ENCODE measurements at regions of chr12 and their contacts with region 1.

Region 1: GRCh38 chr12:102119674-102120563 is at the starts of genes NUP37 and PARPBP:
- DNase-seq: peak; percentile 82 to 95 (median 89)
- ATAC-seq: peak; percentile 94
- H3K4me3 ChIP-seq: peak within 1 kb of the TSS; percentile 86
- H3K4me3 Mint-ChIP-seq: peak within 1 kb of the TSS; percentile 93
- H3K27ac ChIP-seq: peak within 1 kb of the TSS; percentile 55 to 84
- H3K27ac Mint-ChIP-seq: peak within 1 kb of the TSS; percentile 92
- H3K4me1 ChIP-seq: peaks cover 17% of the 10 kb centered on the region
- H3K4me1 Mint-ChIP-seq: peaks cover 42% of the 10 kb centered on the region
- H3K27me3 ChIP-seq: no peaks in the 10 kb centered on the region
- H3K27me3 Mint-ChIP-seq: no peaks in the 10 kb centered on the region
- CTCF ChIP-seq: no peak
- total RNA-seq, gene NUP37: 9.4 to 9.6 TPM
- total RNA-seq, gene PARPBP: 1.1 to 1.5 TPM

Region 2: DNA sequence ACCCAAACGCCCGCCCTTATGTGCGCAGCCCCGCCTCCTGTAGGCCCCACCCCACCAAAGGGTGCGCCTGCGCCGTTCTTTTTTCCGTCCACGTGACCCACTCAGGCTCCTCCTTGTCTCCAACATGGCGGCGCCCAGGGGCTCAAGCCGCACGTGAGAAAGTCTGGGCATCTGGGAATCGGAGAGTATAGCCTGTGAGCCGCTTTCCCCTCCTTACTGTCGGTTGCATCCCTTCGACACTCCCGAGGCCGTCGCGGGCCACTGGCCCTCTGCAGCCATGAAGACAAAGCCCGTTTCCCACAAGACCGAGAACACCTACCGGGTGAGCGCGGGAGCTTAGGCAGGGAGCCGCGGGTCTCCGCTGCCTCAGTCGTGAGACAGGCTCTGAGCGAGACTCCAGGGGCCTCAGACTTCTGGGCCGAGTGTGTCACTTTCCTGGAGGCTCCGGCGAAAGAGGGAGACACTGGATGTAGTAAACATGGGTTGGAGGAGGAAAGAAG is 839.9 kb before region 1 on chr12 and contains the start of gene UTP20:
- CTCF ChIA-PET with region 1: no interaction called
- POLR2A ChIA-PET with region 1: no interaction called
- intact Hi-C with region 1: loop called in 1 of 2 experiments (anchors 5 kb)
- DNase-seq: peak; percentile 89 to 96 (median 94)
- ATAC-seq: peak; percentile 100
- H3K4me3 ChIP-seq: peak within 1 kb of the TSS; percentile 72
- H3K4me3 Mint-ChIP-seq: peak within 1 kb of the TSS; percentile 97
- H3K27ac ChIP-seq: no peak within 1 kb of the TSS
- H3K27ac Mint-ChIP-seq: peak within 1 kb of the TSS; percentile 71
- H3K4me1 ChIP-seq: peaks cover 8% of the 10 kb centered on the region
- H3K4me1 Mint-ChIP-seq: peaks cover 25% of the 10 kb centered on the region
- H3K27me3 ChIP-seq: no peaks in the 10 kb centered on the region
- H3K27me3 Mint-ChIP-seq: peaks cover 13% of the 10 kb centered on the region
- CTCF ChIP-seq: no peak
- total RNA-seq, gene UTP20: 9.1 to 9.6 TPM

Region 3: DNA sequence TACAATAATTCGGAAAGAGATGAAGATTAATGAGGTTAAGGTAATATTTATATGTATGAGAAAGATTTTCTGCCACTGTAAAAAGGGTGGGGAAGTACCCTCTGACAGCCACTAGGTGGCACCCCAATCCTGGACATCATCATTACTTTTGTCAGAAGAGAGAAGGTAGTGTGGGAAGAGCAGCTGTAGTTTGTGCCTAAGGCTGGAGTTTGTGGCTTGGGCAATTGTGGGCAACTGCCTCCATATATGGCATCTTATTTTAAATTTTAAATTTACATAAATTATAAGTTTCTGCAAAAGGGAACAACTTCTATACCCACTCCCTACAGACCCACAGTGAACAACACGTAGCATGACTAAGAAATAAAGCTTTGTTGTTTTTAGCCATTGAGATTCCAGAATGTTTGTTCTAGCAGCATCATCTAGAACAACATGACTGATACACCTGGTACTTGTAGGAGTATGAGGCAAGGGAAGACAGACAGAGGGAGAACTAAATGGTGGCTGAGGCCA is 346.2 kb before region 1 on chr12:
- CTCF ChIA-PET with region 1: no interaction called
- POLR2A ChIA-PET with region 1: no interaction called
- intact Hi-C with region 1: loop called in 1 of 2 experiments (anchors 10 kb)
- DNase-seq: peak; percentile 52 to 85 (median 60)
- ATAC-seq: peak; percentile 97
- H3K4me3 ChIP-seq: no peak overlapping the region
- H3K4me3 Mint-ChIP-seq: no peak overlapping the region
- H3K27ac ChIP-seq: no peak overlapping the region
- H3K27ac Mint-ChIP-seq: no peak overlapping the region
- H3K4me1 ChIP-seq: no peaks in the 10 kb centered on the region
- H3K4me1 Mint-ChIP-seq: peaks cover 5% of the 10 kb centered on the region
- H3K27me3 ChIP-seq: no peaks in the 10 kb centered on the region
- H3K27me3 Mint-ChIP-seq: no peaks in the 10 kb centered on the region
- CTCF ChIP-seq: peak; percentile 92

Region 4: GRCh38 chr12:101876861-101877815 is 242.8 kb before region 1 on chr12 and contains the start of gene DRAM1:
- CTCF ChIA-PET with region 1: no interaction called
- POLR2A ChIA-PET with region 1: no interaction called
- intact Hi-C with region 1: loop called in 1 of 2 experiments (anchors 5 kb)
- DNase-seq: peak; percentile 41 to 89 (median 60)
- ATAC-seq: peak; percentile 79
- H3K4me3 ChIP-seq: peak within 1 kb of the TSS; percentile 79
- H3K4me3 Mint-ChIP-seq: peak within 1 kb of the TSS; percentile 89
- H3K27ac ChIP-seq: peak within 1 kb of the TSS; percentile 29 to 73
- H3K27ac Mint-ChIP-seq: peak within 1 kb of the TSS; percentile 72
- H3K4me1 ChIP-seq: peaks cover 18% of the 10 kb centered on the region
- H3K4me1 Mint-ChIP-seq: peaks cover 7% of the 10 kb centered on the region
- H3K27me3 ChIP-seq: no peaks in the 10 kb centered on the region
- H3K27me3 Mint-ChIP-seq: no peaks in the 10 kb centered on the region
- CTCF ChIP-seq: no peak
- total RNA-seq, gene DRAM1: 1.3 to 1.6 TPM

Region 5: DNA sequence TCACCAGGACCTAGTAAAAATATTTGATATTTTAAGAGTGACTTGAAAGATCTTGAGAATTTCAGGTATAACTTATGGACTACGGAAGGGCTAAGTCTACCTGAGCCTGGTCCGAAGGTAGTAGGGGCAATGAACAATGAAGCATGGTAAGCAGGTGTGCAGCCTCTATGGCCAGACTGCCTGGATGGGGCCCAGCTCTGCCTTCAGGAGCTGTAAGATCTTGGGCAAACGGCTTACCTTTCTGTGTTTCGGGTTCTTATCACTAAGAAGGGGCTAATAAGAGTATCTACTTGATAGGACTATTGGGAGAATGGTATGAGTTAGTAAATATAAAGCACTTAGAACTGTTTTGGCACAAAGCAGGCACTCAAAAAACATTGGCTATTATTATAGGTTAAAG is 39.1 kb before region 1 on chr12:
- CTCF ChIA-PET with region 1: no interaction called
- POLR2A ChIA-PET with region 1: no interaction called
- intact Hi-C with region 1: loop called in 1 of 2 experiments (anchors 5 kb)
- DNase-seq: no peak
- ATAC-seq: no peak
- H3K4me3 ChIP-seq: no peak overlapping the region
- H3K4me3 Mint-ChIP-seq: no peak overlapping the region
- H3K27ac ChIP-seq: no peak overlapping the region
- H3K27ac Mint-ChIP-seq: no peak overlapping the region
- H3K4me1 ChIP-seq: no peaks in the 10 kb centered on the region
- H3K4me1 Mint-ChIP-seq: no peaks in the 10 kb centered on the region
- H3K27me3 ChIP-seq: no peaks in the 10 kb centered on the region
- H3K27me3 Mint-ChIP-seq: no peaks in the 10 kb centered on the region
- CTCF ChIP-seq: no peak

Region 6: GRCh38 chr12:102539651-102540553 is 420.0 kb after region 1 on chr12:
- CTCF ChIA-PET with region 1: no interaction called
- POLR2A ChIA-PET with region 1: no interaction called
- intact Hi-C with region 1: no loop called
- DNase-seq: no peak
- ATAC-seq: no peak
- H3K4me3 ChIP-seq: no peak overlapping the region
- H3K4me3 Mint-ChIP-seq: no peak overlapping the region
- H3K27ac ChIP-seq: no peak overlapping the region
- H3K27ac Mint-ChIP-seq: no peak overlapping the region
- H3K4me1 ChIP-seq: no peaks in the 10 kb centered on the region
- H3K4me1 Mint-ChIP-seq: no peaks in the 10 kb centered on the region
- H3K27me3 ChIP-seq: no peaks in the 10 kb centered on the region
- H3K27me3 Mint-ChIP-seq: peaks cover 4% of the 10 kb centered on the region
- CTCF ChIP-seq: no peak

Measured in CD4-positive, alpha-beta T cell (primary cell).